ENCODE measurements at regions of chr13 and their contacts with region 1.

Region 1: DNA sequence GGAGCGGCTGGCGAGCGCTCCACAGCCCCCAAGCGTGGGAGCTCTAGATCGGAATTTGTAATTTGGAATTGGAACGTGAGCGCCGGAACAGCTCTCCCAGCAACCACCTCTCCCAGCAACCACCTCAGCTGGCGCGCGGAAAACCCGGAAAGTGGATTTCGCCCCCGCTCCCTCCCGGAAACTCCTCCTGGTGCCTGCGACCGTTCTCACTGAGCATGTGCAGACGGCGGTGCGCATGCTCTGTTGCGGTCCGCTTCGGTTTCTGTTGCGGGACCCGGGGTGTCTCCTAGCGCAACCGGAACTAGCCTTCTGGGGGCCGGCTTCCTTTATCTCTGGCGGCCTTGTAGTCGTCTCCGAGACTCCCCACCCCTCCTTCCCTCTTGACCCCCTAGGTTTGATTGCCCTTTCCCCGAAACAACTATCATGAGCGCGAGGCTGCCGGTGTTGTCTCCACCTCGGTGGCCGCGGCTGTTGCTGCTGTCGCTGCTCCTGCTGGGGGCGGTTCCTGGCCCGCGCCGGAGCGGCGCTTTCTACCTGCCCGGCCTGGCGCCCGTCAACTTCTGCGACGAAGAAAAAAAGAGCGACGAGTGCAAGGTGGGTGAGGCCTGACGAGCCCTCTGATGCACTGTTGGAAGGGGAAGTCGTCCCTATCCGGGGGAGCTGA is at the start of gene TM9SF2:
- DNase-seq: peak; percentile 98
- H3K4me3 ChIP-seq: peak within 1 kb of the TSS; percentile 73 to 99 (median 84)
- H3K27ac ChIP-seq: peak within 1 kb of the TSS; percentile 79 to 90 (median 89)
- H3K4me1 ChIP-seq: peaks cover 59 to 79% (median 63%) of the 10 kb centered on the region in 4 donors
- H3K27me3 ChIP-seq: no peaks in the 10 kb centered on the region
- CTCF ChIP-seq: peak in 1 of 3 experiments; percentile 19
- EP300 ChIP-seq: no peak
- POLR2A ChIP-seq: peak; percentile 67
- total RNA-seq, gene TM9SF2: 65.6 to 86.9 (median 71.8) TPM

Region 2: DNA sequence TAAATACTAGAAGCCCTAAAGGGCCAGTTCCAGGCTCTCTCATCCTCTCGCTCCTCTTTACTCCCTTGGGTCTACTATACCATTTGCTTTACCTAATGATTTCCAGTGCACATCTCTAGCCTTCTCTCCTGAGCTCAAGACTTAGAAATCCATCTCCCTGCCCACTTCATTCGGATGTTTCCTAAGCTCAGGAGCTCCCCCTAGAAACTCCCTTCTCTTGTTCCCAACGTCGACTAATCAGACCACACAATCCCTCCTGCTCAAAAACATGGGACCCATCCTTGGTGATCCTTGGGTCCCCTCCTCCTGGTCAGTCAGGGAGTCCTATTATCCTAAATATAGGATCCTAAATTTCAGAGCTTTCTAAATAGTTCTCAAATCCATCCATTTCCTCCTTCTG is 903.3 kb before region 1 on chr13:
- intact Hi-C with region 1: no loop called
- DNase-seq: no peak
- H3K4me3 ChIP-seq: no peak overlapping the region
- H3K27ac ChIP-seq: no peak overlapping the region
- H3K4me1 ChIP-seq: peaks cover 0 to 4% (median 0%) of the 10 kb centered on the region in 4 donors
- H3K27me3 ChIP-seq: no peaks in the 10 kb centered on the region
- CTCF ChIP-seq: no peak
- EP300 ChIP-seq: no peak
- POLR2A ChIP-seq: no peak

Region 3: GRCh38 chr13:99436686-99437416 is 64.5 kb before region 1 on chr13:
- intact Hi-C with region 1: loop called (anchors 5 kb)
- DNase-seq: peak; percentile 98
- H3K4me3 ChIP-seq: peak overlapping the region in 2 of 4 donors; percentile 8 to 34
- H3K27ac ChIP-seq: no peak overlapping the region
- H3K4me1 ChIP-seq: peaks cover 0 to 28% (median 23%) of the 10 kb centered on the region in 4 donors
- H3K27me3 ChIP-seq: peaks cover 0 to 11% (median 0%) of the 10 kb centered on the region in 4 donors
- CTCF ChIP-seq: peak in 2 of 3 experiments; percentile 100
- EP300 ChIP-seq: no peak
- POLR2A ChIP-seq: no peak

Region 4: DNA sequence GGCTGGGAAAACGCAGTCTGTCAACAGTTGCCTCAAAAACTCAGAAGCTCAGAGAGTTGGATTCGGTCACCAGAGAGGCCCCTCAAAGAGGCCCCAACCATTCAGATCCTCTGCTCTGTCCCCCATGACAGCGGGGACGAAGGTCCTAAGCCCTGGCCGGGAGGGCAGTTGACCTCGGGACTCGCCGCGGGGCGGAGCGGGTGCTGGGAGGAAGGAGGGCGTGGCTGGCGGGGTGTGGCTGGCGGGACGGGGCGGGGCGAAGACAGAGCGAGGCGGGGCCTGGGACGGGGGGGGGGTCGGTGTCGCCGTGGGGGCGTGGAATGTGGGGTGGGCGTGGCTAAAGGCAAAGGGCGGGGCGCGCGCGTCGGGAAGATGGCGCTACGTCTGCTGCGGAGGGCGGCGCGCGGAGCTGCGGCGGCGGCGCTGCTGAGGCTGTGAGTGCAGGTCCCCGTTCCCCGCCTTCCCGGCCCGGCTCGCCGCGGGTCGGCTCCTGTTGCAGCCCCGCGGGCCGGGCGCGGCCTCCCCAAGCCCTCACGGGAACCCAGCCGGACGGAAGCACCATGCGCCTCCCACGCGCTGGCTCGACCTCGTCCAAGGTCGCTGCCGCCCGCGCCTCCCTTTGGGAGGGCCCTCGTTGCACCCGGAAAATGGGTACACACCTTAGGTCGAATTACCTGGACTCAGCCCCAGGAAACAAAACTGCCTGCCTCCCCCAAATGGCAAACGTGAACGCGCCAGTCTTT is 105.2 kb after region 1 on chr13:
- intact Hi-C with region 1: loop called (anchors 5 kb)
- DNase-seq: peak; percentile 97
- H3K4me3 ChIP-seq: peak within 1 kb of the TSS; percentile 82 to 93 (median 90)
- H3K27ac ChIP-seq: peak within 1 kb of the TSS; percentile 86 to 89 (median 88)
- H3K4me1 ChIP-seq: peaks cover 8 to 17% (median 16%) of the 10 kb centered on the region in 4 donors
- H3K27me3 ChIP-seq: no peaks in the 10 kb centered on the region
- CTCF ChIP-seq: no peak
- EP300 ChIP-seq: no peak
- POLR2A ChIP-seq: peak; percentile 45

Measured in esophagus muscularis mucosa (tissue), 4 donors.